Dendritic cell treated with granulocyte-macrophage colony-stimulating factor and Interleukin-4, amounts not matched to agents 40 ng/mL and 50 ng/mL, for 4 days (primary cell): ENCODE measurements at regions of chr5 and their contacts with region 1.

Region 1: GRCh38 chr5:122774861-122775549 is at the start of gene SNX2:
- H3K4me3 Mint-ChIP-seq: peak within 1 kb of the TSS; percentile 99
- H3K27ac Mint-ChIP-seq: peak within 1 kb of the TSS; percentile 100
- H3K4me1 Mint-ChIP-seq: peaks cover 52% of the 10 kb centered on the region
- H3K27me3 Mint-ChIP-seq: peaks cover 2% of the 10 kb centered on the region

Region 2: DNA sequence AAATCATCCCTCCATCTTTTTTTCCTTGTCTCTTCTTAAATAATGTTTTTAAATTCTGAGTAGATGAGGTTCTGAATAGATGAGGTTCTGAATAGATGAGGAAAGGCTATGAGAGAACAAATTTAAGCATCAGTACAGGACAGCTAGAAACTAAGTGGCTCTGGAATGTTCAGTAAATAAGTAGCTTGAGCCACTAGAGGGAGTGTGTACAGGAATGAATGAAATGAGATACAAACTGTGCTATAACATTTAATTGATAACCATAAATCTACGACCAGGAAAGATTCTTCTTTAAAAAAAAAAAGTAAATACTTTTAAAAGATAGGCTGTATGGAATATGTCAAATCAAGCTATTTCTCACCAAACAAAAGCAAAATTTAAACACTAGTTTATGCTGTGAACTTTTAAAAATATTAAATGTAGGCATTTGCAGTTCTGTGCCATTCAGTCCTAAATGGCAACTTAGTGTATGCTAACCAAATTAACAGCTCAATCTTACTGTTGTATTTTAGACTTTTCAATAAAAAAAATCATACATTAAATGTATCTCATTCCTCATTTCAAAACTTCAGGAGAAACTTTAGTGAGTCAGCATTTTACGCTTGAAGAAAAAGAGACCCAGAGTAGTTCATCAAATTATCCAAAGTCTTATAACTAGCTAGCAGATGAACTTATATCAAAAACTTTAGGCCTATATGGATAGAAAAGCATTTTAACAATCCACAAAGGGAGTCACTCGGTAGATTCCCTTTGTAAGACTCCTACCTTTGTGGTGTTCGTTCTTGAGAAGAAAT is 70.6 kb before region 1 on chr5:
- intact Hi-C with region 1: loop called (anchors 5 kb)
- H3K4me3 Mint-ChIP-seq: no peak overlapping the region
- H3K27ac Mint-ChIP-seq: no peak overlapping the region
- H3K4me1 Mint-ChIP-seq: peaks cover 13% of the 10 kb centered on the region
- H3K27me3 Mint-ChIP-seq: peaks cover 4% of the 10 kb centered on the region

Region 3: GRCh38 chr5:122756263-122756911 is 18.6 kb before region 1 on chr5:
- intact Hi-C with region 1: loop called (anchors 1 kb)
- H3K4me3 Mint-ChIP-seq: peak overlapping the region; percentile 7
- H3K27ac Mint-ChIP-seq: peak overlapping the region; percentile 94
- H3K4me1 Mint-ChIP-seq: peaks cover 43% of the 10 kb centered on the region
- H3K27me3 Mint-ChIP-seq: no peaks in the 10 kb centered on the region

Region 4: GRCh38 chr5:122790354-122791103 is 15.5 kb after region 1 on chr5:
- intact Hi-C with region 1: loop called (anchors 2 kb)
- H3K4me3 Mint-ChIP-seq: no peak overlapping the region
- H3K27ac Mint-ChIP-seq: peak overlapping the region; percentile 68
- H3K4me1 Mint-ChIP-seq: peaks cover 49% of the 10 kb centered on the region
- H3K27me3 Mint-ChIP-seq: no peaks in the 10 kb centered on the region

Region 5: DNA sequence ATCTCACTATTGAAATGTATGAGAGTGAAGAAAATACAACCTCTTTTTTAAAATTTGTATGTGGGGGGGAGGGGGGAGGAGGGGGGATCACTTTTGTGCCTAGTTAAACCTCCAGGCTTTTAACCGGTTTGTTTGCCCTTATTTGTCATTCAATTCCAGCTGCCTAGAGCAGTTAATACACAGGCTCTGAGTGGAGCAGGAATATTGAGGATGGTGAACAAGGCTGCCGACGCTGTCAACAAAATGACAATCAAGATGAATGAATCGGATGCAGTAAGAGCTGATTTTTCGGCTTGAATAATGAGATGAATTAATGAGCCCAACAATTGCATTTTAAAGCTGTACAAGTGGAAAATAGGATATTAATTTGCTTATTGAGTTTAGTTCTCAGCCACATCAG is 41.8 kb after region 1 on chr5:
- intact Hi-C with region 1: no loop called
- H3K4me3 Mint-ChIP-seq: no peak overlapping the region
- H3K27ac Mint-ChIP-seq: no peak overlapping the region
- H3K4me1 Mint-ChIP-seq: no peaks in the 10 kb centered on the region
- H3K27me3 Mint-ChIP-seq: no peaks in the 10 kb centered on the region